ENCODE measurements at regions of chr12 and their contacts with region 1.

Region 1: DNA sequence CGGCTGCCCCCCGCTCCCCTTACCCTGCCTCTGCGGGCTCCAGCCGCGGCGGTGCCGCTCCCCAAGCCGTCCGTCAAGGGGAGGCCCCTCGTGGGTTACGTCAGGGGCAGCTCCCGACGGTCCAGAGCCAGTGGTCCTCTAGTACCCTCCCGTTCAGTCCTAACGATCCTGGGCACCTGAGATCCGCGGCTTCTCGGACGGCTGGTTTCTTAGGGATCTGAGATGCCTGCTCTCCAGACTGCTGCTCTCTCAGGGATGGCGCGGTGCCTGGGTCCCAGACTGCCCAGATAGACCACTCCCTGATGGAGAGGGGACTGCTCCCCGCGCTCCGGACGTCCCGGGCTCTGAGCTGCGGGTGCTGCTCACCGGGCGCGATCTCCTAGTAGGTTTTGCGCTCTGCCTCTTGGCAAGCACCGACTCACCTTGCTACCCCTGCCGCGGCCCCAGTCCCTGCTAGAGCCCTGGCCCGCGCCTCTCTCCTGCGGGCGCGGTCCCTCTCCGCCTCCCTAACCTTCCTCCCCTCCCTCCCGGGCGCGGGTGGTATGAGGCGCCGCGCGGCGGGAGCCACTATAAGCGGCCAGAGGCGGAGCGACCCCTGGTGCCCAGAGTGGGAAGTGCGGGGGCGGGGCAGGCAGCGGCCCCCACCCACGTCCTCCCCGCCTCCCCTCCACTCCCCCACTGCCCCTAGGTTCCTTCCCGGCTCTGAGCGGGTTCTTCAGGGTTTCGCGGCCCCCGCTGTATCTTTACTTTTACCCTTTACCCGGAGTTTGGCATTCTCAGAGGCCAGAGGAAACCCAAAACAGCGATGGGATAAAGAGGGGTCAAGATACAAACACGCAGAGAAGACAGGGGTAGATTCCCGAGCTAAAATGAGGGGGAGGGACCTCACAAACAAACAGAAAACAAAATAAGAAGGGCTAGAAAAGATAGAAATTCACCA is at the start of gene C1QL4:
- DNase-seq: peak; percentile 85
- H3K4me3 ChIP-seq: peak within 1 kb of the TSS in 3 of 4 donors; percentile 23 to 39 (median 37)
- H3K27ac ChIP-seq: no peak within 1 kb of the TSS
- H3K4me1 ChIP-seq: peaks cover 0 to 28% (median 16%) of the 10 kb centered on the region in 4 donors
- H3K27me3 ChIP-seq: peaks cover 37 to 96% (median 63%) of the 10 kb centered on the region in 3 donors
- CTCF ChIP-seq: peak; percentile 41 to 99 (median 72)
- EP300 ChIP-seq: no peak
- POLR2A ChIP-seq: no peak
- total RNA-seq, gene C1QL4: not detected

Region 2: GRCh38 chr12:49288412-49288853 is 48.5 kb before region 1 on chr12:
- intact Hi-C with region 1: loop called (anchors 5 kb)
- DNase-seq: peak; percentile 68
- H3K4me3 ChIP-seq: no peak overlapping the region
- H3K27ac ChIP-seq: no peak overlapping the region
- H3K4me1 ChIP-seq: peaks cover 0 to 7% (median 3%) of the 10 kb centered on the region in 4 donors
- H3K27me3 ChIP-seq: peaks cover 0 to 33% (median 0%) of the 10 kb centered on the region in 3 donors
- CTCF ChIP-seq: peak; percentile 64 to 81 (median 71)
- EP300 ChIP-seq: no peak
- POLR2A ChIP-seq: no peak